ENCODE measurements at regions of chr18 and their contacts with region 1.

Region 1: GRCh38 chr18:54269893-54270844 is 852 bp downstream of the POLI start:
- DNase-seq: peak; percentile 32 to 66
- ATAC-seq: peak; percentile 25 to 47 (median 37)
- H3K4me3 ChIP-seq: peak overlapping the region; percentile 74
- H3K4me3 Mint-ChIP-seq: peak overlapping the region; percentile 96
- H3K27ac ChIP-seq: peak overlapping the region; percentile 90
- H3K27ac Mint-ChIP-seq: peak overlapping the region; percentile 80 to 98
- H3K4me1 ChIP-seq: peaks cover 11% of the 10 kb centered on the region
- H3K4me1 Mint-ChIP-seq: peaks cover 23 to 24% of the 10 kb centered on the region in 2 donors
- H3K27me3 ChIP-seq: no peaks in the 10 kb centered on the region
- H3K27me3 Mint-ChIP-seq: no peaks in the 10 kb centered on the region
- CTCF ChIP-seq: peak; percentile 49

Region 2: GRCh38 chr18:54224379-54225014 is 45.7 kb before region 1 on chr18 and contains the start of gene MBD2:
- intact Hi-C with region 1: loop called (anchors 1 kb)
- DNase-seq: peak; percentile 91 to 96
- ATAC-seq: peak; percentile 90 to 98 (median 93)
- H3K4me3 ChIP-seq: peak within 1 kb of the TSS; percentile 47
- H3K4me3 Mint-ChIP-seq: peak within 1 kb of the TSS; percentile 98
- H3K27ac ChIP-seq: peak within 1 kb of the TSS; percentile 66
- H3K27ac Mint-ChIP-seq: peak within 1 kb of the TSS; percentile 87 to 98
- H3K4me1 ChIP-seq: peaks cover 20% of the 10 kb centered on the region
- H3K4me1 Mint-ChIP-seq: peaks cover 37 to 42% of the 10 kb centered on the region in 2 donors
- H3K27me3 ChIP-seq: no peaks in the 10 kb centered on the region
- H3K27me3 Mint-ChIP-seq: no peaks in the 10 kb centered on the region
- CTCF ChIP-seq: no peak
- total RNA-seq, gene MBD2: 74.8 to 107 (median 92.3) TPM